ENCODE measurements at regions of chr18 and their contacts with region 1.

Region 1: DNA sequence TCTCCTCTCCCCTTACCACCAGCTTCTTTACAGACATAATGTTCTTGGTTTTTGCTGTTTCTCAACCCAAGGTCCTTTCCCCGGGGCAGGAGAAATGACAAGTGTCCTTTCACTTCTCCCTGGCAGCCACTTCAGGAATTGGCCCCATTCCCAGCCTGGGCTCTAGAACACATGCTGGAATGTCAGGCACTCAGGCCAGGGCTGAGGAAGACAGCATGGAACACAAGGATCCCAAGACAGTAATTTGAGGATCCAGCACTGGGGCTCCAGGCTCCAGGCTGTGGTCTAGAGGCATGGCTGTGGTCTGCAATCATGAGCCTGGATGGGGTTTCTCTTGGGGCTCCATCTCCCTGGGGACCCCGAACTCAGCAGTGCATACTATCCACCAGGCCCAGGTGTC is 201.4 kb downstream of the CELF4 start:
- DNase-seq: no peak
- ATAC-seq: no peak
- H3K4me3 ChIP-seq: no peak overlapping the region
- H3K27ac ChIP-seq: no peak overlapping the region
- H3K4me1 ChIP-seq: no peaks in the 10 kb centered on the region
- H3K27me3 ChIP-seq: no peaks in the 10 kb centered on the region
- CTCF ChIP-seq: no peak

Region 2: DNA sequence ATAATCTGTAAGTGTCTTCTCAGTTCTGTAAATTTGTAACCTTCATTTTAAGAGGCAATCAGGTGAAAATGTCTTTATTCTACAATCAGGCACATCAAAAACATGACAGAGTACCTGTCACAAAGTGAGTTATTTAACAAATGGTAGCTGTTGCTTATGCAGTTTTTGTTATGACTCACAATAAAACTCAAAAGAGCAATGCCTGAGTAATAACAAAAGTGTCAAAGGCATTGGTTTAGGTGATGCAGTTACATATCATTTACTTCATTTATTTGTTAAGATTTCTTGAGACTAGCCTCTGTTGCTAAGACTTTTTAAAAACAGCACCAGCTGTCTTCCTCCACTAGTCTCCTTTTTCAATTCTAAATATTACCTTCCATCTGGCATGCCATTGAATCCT is 357.5 kb before region 1 on chr18:
- CTCF ChIA-PET with region 1: interaction called, 12 read pairs
- POLR2A ChIA-PET with region 1: no interaction called
- intact Hi-C with region 1: no loop called
- DNase-seq: no peak
- ATAC-seq: no peak
- H3K4me3 ChIP-seq: no peak overlapping the region
- H3K27ac ChIP-seq: no peak overlapping the region
- H3K4me1 ChIP-seq: no peaks in the 10 kb centered on the region
- H3K27me3 ChIP-seq: no peaks in the 10 kb centered on the region
- CTCF ChIP-seq: no peak

Region 3: GRCh38 chr18:37450434-37451132 is 86.3 kb after region 1 on chr18:
- CTCF ChIA-PET with region 1: no interaction called
- POLR2A ChIA-PET with region 1: no interaction called
- intact Hi-C with region 1: no loop called
- DNase-seq: no peak
- ATAC-seq: no peak
- H3K4me3 ChIP-seq: no peak overlapping the region
- H3K27ac ChIP-seq: no peak overlapping the region
- H3K4me1 ChIP-seq: no peaks in the 10 kb centered on the region
- H3K27me3 ChIP-seq: no peaks in the 10 kb centered on the region
- CTCF ChIP-seq: no peak